Activated CD8-positive, alpha-beta T cell treated with anti-CD3 and anti-CD28 coated beads, Interleukin-2, amount 10 ng/mL, durations not matched to agents 7 days and 5 days (primary cell): ENCODE measurements at regions of chr9 and their contacts with region 1.

Region 1: GRCh38 chr9:122125158-122125508 is 32.0 kb upstream of the TTLL11 start:
- DNase-seq: peak; percentile 82
- ATAC-seq: peak; percentile 87
- H3K4me3 Mint-ChIP-seq: no peak overlapping the region
- H3K27ac Mint-ChIP-seq: no peak overlapping the region
- H3K4me1 Mint-ChIP-seq: peaks cover 22% of the 10 kb centered on the region
- H3K27me3 Mint-ChIP-seq: peaks cover 30% of the 10 kb centered on the region

Region 2: DNA sequence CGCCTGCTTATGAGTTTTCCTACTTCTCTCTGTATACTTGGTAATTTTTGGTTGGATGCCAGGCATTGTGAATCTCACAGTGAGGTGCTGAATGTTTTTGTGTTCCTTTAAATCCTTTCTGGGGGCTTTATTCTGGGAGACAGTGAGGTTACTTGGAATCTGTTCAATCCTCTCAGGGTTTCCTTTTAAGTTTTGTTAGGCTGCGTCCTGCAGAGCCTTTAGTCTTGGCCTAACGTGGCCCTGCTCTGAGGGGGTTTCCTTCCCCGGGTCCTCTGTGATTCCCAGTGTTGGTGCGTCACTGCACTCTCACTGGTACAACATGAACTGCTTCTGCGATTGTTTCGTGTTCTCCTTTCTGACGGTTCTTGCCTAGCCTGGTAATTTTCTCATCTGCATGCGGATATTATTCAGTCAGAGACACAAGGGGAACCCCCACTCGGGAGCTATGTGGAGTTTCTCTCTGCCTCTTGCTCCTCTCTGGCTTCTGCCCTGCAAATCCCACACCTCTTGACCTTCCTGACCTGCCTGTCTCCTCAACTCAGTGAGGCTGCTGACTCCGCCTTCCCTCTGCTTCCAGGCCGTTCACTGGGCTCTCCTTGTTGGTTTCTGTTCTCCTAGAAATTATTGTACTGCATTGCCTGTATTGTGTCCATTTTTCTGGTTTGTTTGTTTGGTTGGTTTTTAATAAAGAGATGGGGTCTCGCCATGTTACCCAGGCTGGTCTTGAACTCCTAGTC is 345.6 kb before region 1 on chr9:
- CTCF ChIA-PET with region 1: no interaction called
- POLR2A ChIA-PET with region 1: no interaction called
- DNase-seq: no peak
- ATAC-seq: no peak
- H3K4me3 Mint-ChIP-seq: no peak overlapping the region
- H3K27ac Mint-ChIP-seq: no peak overlapping the region
- H3K4me1 Mint-ChIP-seq: peaks cover 17% of the 10 kb centered on the region
- H3K27me3 Mint-ChIP-seq: peaks cover 9% of the 10 kb centered on the region

Region 3: DNA sequence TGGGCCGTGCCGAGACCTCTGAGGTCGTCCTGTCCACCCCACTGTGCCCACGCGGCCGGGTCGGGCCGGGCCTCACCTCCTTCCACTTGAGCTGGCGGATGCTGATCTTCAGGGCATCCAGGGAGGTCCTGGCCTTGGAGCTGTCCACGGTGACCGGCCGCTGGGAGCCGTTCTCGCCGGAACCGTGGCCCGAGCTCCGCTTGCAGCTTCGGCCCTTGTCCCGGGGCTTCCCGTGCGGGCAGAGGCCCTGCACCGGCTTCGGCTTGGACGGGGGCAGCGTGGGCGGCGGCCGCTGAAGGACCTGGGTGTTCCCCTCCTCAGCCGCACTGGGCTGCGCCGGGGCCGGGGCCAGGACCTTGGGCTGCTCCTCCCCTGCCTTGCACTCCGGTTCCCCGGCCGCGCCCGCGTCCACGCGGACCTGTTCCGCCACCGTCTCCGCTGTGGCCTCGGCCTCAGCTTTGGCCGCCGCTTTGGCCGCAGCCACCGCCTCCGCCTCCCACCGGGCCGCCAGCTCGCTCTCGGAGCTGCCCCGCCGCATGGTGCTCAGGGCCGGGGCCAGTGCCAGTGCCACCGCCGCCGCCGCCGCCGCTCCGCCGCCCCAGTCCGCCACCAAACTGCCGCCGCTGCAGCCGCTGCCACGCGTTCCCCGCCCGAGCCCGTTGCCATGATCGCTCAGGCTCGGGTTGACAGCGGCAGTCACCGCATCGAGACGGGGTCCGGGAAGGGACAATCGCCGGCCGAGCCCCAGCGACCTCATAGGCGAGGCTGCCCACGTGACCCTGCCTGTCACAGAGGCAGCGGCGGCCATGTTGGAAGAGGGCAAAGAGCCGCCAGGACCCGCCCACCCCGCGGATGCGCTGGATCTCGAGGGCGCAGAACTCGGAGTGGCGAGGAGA is 32.3 kb before region 1 on chr9 and contains the start of gene TTLL11:
- CTCF ChIA-PET with region 1: interaction called, 254 read pairs
- POLR2A ChIA-PET with region 1: no interaction called
- DNase-seq: peak; percentile 97
- ATAC-seq: peak; percentile 97
- H3K4me3 Mint-ChIP-seq: peak within 1 kb of the TSS; percentile 81
- H3K27ac Mint-ChIP-seq: peak within 1 kb of the TSS; percentile 64
- H3K4me1 Mint-ChIP-seq: peaks cover 33% of the 10 kb centered on the region
- H3K27me3 Mint-ChIP-seq: peaks cover 18% of the 10 kb centered on the region
- total RNA-seq, gene TTLL11: 2.6 to 3.3 TPM

Region 4: DNA sequence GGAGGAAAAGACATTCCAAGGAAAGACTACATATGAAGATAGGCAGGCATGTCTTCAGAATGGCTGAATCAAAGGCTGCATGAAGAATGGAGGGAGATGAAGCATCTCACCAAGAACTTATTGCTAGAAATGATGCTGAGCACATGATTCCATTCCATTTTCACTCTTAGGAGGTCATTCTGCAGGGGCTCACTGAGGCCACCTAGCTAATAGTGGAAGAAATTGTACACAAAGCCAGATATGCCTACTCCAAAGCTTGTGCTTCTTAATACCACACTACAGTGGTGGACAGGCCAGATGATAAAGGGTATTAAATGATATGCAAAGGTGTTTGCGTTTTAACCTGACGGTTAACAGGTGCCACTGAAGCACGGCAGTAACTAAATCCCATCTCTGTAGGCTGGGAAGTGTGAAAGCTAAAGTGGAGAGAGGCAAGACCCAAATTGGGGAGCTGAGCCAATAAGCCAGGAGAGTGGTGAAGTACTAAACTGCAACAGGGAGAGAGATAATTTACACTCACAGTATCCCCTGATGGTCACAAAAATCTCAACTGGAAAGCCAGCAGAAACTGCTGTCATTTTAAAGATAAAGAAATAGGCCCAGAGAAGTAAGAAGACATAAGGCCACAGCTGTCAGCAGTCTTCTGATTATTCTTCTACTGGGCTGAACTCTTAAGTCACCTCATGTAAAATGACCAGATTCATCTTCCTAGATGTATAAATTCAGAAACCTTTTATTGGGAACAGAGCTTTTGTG is 19.9 kb after region 1 on chr9:
- CTCF ChIA-PET with region 1: interaction called, 36 read pairs
- POLR2A ChIA-PET with region 1: no interaction called
- DNase-seq: no peak
- ATAC-seq: no peak
- H3K4me3 Mint-ChIP-seq: no peak overlapping the region
- H3K27ac Mint-ChIP-seq: no peak overlapping the region
- H3K4me1 Mint-ChIP-seq: peaks cover 2% of the 10 kb centered on the region
- H3K27me3 Mint-ChIP-seq: no peaks in the 10 kb centered on the region

Region 5: DNA sequence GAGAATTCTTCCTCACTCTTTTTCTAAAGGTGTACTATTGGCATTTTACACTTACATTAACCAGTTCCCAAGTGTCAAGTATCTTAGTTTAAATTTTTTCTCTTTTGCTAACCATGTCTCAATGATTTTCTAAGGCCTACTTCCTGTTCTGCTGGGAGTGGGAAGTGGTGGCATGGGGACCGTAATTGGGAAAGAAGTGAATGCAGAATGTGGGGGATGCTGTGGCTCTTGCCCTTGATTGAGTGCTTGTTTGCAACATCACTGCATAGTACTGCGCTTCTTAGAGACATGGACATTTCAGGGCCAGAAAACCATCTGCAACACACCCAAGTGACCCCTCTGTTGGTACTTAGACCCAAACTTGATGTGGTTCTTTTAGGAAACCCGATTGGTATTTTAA is 172.4 kb after region 1 on chr9:
- CTCF ChIA-PET with region 1: no interaction called
- POLR2A ChIA-PET with region 1: no interaction called
- DNase-seq: no peak
- ATAC-seq: no peak
- H3K4me3 Mint-ChIP-seq: no peak overlapping the region
- H3K27ac Mint-ChIP-seq: no peak overlapping the region
- H3K4me1 Mint-ChIP-seq: no peaks in the 10 kb centered on the region
- H3K27me3 Mint-ChIP-seq: no peaks in the 10 kb centered on the region

Region 6: GRCh38 chr9:122350638-122351355 is 225.7 kb after region 1 on chr9:
- CTCF ChIA-PET with region 1: interaction called, 241 read pairs
- POLR2A ChIA-PET with region 1: no interaction called
- DNase-seq: peak; percentile 86
- ATAC-seq: peak; percentile 90
- H3K4me3 Mint-ChIP-seq: no peak overlapping the region
- H3K27ac Mint-ChIP-seq: no peak overlapping the region
- H3K4me1 Mint-ChIP-seq: peaks cover 28% of the 10 kb centered on the region
- H3K27me3 Mint-ChIP-seq: peaks cover 7% of the 10 kb centered on the region

Region 7: GRCh38 chr9:122810306-122810946 is 685.3 kb after region 1 on chr9:
- CTCF ChIA-PET with region 1: interaction called, 13 read pairs
- POLR2A ChIA-PET with region 1: no interaction called
- DNase-seq: peak; percentile 85
- ATAC-seq: peak; percentile 73
- H3K4me3 Mint-ChIP-seq: no peak overlapping the region
- H3K27ac Mint-ChIP-seq: no peak overlapping the region
- H3K4me1 Mint-ChIP-seq: peaks cover 34% of the 10 kb centered on the region
- H3K27me3 Mint-ChIP-seq: no peaks in the 10 kb centered on the region